B cell (primary cell): ENCODE measurements at regions of chr19 and their contacts with region 1.

Region 1: GRCh38 chr19:34974646-34975045 is 10.6 kb upstream of the ZNF792 start:
- DNase-seq: no peak
- ATAC-seq: no peak
- H3K4me3 ChIP-seq: no peak overlapping the region
- H3K4me3 Mint-ChIP-seq: no peak overlapping the region
- H3K27ac ChIP-seq: no peak overlapping the region
- H3K27ac Mint-ChIP-seq: no peak overlapping the region
- H3K4me1 ChIP-seq: peaks cover 0 to 8% of the 10 kb centered on the region in 2 donors
- H3K4me1 Mint-ChIP-seq: peaks cover 6% of the 10 kb centered on the region
- H3K27me3 ChIP-seq: peaks cover 0 to 3% (median under 1%) of the 10 kb centered on the region in 4 experiments
- H3K27me3 Mint-ChIP-seq: peaks cover 14% of the 10 kb centered on the region
- CTCF ChIP-seq: no peak

Region 2: DNA sequence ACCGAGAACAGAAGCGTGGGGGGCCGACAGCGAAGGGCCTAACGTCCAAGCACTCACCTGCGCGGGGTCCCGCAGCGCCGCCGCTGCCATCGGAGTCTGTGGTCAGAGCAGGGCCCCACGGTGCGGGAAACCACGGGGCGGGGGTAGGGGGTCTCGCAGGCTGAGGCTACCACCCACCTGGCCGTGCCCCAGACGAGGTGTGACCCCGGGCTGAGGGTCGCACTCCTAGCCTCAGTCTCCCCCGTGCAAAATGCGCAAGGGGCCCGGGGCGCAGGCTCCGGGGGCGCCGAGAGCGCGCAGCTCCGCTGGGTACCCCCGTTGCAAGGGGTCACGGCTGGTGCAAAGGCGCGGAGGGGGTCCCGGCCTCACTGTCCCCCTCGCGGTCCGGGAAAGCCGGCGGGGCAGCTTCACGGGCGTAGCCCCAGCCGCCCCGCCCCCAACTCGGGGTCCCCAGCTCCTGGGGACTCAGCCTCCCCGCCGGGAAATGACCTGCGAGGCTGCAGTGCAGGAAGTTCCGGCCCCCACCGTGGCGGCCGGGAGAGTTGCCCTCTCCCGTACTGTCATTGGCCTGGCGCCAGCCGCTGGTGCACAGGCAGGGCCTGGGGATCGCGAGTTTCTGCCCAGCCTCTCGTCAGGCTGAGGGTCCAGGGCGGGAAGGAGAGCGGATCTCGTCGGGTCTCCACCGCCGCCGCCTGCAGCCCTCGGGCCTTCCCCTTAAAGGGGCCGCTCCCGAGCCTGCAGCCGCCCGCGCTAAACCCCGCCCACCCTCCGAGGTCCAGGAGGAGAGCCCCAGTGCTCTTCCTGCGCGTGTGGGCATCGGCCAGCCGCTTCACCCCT is 10.9 kb before region 1 on chr19 and contains the start of gene ZNF792:
- CTCF ChIA-PET with region 1: interaction called, 12 read pairs
- POLR2A ChIA-PET with region 1: no interaction called
- intact Hi-C with region 1: no loop called
- DNase-seq: peak; percentile 51
- ATAC-seq: peak; percentile 78
- H3K4me3 ChIP-seq: peak within 1 kb of the TSS; percentile 41 to 86 (median 82)
- H3K4me3 Mint-ChIP-seq: peak within 1 kb of the TSS; percentile 90
- H3K27ac ChIP-seq: peak within 1 kb of the TSS in 1 of 2 donors; percentile 67
- H3K27ac Mint-ChIP-seq: peak within 1 kb of the TSS; percentile 64
- H3K4me1 ChIP-seq: peaks cover 17 to 20% of the 10 kb centered on the region in 2 donors
- H3K4me1 Mint-ChIP-seq: peaks cover 29% of the 10 kb centered on the region
- H3K27me3 ChIP-seq: peaks cover 0 to 3% (median 0%) of the 10 kb centered on the region in 4 experiments
- H3K27me3 Mint-ChIP-seq: peaks cover 7% of the 10 kb centered on the region
- CTCF ChIP-seq: no peak
- total RNA-seq, gene ZNF792: 10.9 and 11.2 TPM in 2 replicates

Region 3: GRCh38 chr19:35006342-35007018 is 31.8 kb after region 1 on chr19:
- CTCF ChIA-PET with region 1: interaction called, 71 read pairs
- POLR2A ChIA-PET with region 1: no interaction called
- intact Hi-C with region 1: loop called (anchors 1 kb)
- DNase-seq: no peak
- ATAC-seq: no peak
- H3K4me3 ChIP-seq: no peak overlapping the region
- H3K4me3 Mint-ChIP-seq: no peak overlapping the region
- H3K27ac ChIP-seq: no peak overlapping the region
- H3K27ac Mint-ChIP-seq: no peak overlapping the region
- H3K4me1 ChIP-seq: peaks cover 23 to 27% of the 10 kb centered on the region in 2 donors
- H3K4me1 Mint-ChIP-seq: peaks cover 27% of the 10 kb centered on the region
- H3K27me3 ChIP-seq: no peaks in the 10 kb centered on the region
- H3K27me3 Mint-ChIP-seq: no peaks in the 10 kb centered on the region
- CTCF ChIP-seq: no peak

Region 4: DNA sequence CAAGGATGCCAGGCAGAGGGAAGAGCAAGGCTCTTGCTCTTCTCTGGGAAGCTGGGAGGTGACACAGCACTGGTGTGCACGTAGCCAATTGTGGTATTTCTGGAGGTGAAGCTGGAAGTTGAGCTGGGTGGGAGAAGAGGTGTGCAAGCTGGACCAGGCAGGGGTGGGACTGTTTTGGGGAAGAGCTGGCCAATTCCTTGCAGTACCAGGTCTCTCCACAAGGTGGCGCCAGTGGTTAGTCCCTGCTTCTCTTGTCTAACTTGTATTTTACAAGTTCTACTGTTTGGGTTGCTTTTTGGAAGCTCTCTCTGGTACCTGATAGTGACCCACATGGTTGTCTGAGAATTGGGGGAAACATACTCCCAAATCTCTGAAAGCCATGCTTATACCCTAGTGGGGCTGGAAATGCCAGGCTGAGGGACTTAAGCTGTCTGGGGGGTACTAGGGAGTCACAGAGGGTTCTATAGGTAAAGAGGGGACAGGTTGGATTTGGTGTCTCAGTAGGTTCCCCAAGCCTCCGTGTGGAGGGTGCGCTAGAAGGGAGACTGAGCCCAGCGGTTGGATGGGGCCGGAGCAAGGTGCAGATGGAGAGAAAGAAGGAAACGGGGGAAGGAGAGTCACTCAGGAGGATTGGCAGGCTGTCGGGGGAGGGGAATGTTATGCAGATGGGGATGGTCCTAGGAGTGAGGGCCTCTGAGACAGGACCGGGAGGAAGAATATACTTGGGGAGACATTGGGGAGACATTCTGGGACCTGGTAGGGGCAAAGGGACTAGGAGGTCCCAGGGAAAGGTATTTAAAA is 69.9 kb after region 1 on chr19:
- CTCF ChIA-PET with region 1: interaction called, 3 read pairs
- POLR2A ChIA-PET with region 1: no interaction called
- intact Hi-C with region 1: loop called (anchors 1 kb)
- DNase-seq: peak; percentile 63
- ATAC-seq: no peak
- H3K4me3 ChIP-seq: no peak overlapping the region
- H3K4me3 Mint-ChIP-seq: no peak overlapping the region
- H3K27ac ChIP-seq: no peak overlapping the region
- H3K27ac Mint-ChIP-seq: peak overlapping the region; percentile 32
- H3K4me1 ChIP-seq: peaks cover 27 to 35% of the 10 kb centered on the region in 2 donors
- H3K4me1 Mint-ChIP-seq: peaks cover 35% of the 10 kb centered on the region
- H3K27me3 ChIP-seq: peaks cover 0 to 22% (median 7%) of the 10 kb centered on the region in 4 experiments
- H3K27me3 Mint-ChIP-seq: peaks cover 14% of the 10 kb centered on the region
- CTCF ChIP-seq: peak; percentile 94

Region 5: DNA sequence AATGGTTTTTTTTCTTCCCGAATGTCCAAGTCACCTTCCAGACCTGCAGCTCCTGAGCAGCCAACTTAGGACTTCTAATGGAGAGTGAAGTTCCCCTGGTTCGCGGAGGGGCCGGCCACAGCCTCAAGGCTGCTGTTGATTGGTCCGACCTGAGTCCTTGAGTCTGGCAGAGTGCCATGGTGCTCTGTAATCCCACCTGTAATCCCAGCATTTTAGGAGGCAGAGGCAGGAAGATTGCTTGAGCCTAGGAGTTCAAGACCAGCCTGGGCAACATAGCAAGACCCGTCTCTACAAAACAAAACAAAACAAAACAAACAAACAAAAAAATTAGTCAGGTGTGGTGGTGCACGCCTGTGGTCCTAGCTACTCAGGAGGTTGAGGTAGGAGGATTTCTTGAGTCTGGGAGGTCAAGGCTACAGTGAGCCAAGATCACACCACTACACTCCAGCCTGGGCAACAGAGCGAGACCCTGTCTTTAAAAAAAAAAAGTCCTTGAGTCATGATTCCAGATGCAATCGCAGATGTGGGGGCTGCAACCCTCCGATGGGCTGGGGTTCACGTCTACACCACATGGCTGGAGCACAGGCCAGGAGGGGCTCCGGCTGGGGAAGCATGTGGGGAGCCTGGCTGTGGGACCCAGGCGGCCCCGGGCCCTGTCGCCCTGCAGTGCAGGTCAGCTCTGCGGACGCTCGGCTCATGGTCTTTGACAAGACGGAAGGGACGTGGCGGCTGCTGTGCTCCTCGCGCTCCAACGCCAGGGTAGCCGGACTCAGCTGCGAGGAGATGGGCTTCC is 84.6 kb after region 1 on chr19:
- CTCF ChIA-PET with region 1: no interaction called
- POLR2A ChIA-PET with region 1: no interaction called
- intact Hi-C with region 1: no loop called
- DNase-seq: no peak
- ATAC-seq: no peak
- H3K4me3 ChIP-seq: no peak overlapping the region
- H3K4me3 Mint-ChIP-seq: no peak overlapping the region
- H3K27ac ChIP-seq: no peak overlapping the region
- H3K27ac Mint-ChIP-seq: no peak overlapping the region
- H3K4me1 ChIP-seq: no peaks in the 10 kb centered on the region
- H3K4me1 Mint-ChIP-seq: no peaks in the 10 kb centered on the region
- H3K27me3 ChIP-seq: no peaks in the 10 kb centered on the region
- H3K27me3 Mint-ChIP-seq: peaks cover 9% of the 10 kb centered on the region
- CTCF ChIP-seq: no peak